Ascending aorta (tissue), 2 donors: ENCODE measurements at regions of chr5 and their contacts with region 1.

Region 1: GRCh38 chr5:4124221-4124970 is 528.8 kb downstream of the IRX1 start:
- DNase-seq: no peak
- H3K4me3 ChIP-seq: no peak overlapping the region
- H3K27ac ChIP-seq: no peak overlapping the region
- H3K4me1 ChIP-seq: no peaks in the 10 kb centered on the region
- H3K27me3 ChIP-seq: no peaks in the 10 kb centered on the region
- CTCF ChIP-seq: no peak

Region 2: DNA sequence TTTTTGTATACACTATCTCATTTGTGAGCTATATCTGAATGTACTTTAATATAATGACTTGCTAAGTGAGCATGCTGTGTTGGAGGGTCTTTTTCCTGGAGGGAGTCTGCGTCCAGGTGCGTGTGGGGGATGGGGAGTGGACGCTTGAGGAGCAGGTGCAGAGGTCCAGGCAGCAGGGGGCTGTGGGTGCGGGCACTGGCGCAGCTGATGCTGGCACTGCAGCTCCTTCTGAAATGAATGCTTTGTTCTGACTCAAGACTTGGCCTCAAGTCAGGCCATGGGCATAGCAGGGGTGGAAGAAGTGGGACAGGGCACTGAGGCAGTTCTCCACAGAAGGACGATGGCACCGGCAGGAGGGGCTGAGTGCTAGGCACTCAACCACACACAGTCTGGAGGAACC is 694.4 kb before region 1 on chr5:
- intact Hi-C with region 1: loop called (anchors 10 kb)
- DNase-seq: no peak
- H3K4me3 ChIP-seq: no peak overlapping the region
- H3K27ac ChIP-seq: no peak overlapping the region
- H3K4me1 ChIP-seq: no peaks in the 10 kb centered on the region
- H3K27me3 ChIP-seq: no peaks in the 10 kb centered on the region
- CTCF ChIP-seq: no peak

Region 3: DNA sequence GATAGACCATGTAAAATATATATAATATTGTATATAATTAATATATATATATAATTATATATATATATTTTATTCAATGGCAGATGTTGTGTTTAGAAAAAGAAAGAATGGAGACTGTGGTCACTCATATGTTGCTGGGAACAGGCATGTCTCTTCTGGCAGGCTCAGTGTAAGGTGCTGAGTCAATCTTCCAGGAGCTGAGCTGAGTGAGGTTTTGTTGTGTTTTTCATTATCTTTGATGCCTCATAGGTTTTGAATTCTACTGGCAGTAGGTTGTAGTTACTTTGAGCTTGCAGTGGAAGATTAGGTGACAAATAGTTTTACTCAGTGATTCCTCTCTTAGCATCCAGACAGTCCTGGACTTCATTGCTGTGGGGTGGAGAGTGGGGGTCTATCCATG is 32.5 kb after region 1 on chr5:
- intact Hi-C with region 1: no loop called
- DNase-seq: no peak
- H3K4me3 ChIP-seq: no peak overlapping the region
- H3K27ac ChIP-seq: no peak overlapping the region
- H3K4me1 ChIP-seq: no peaks in the 10 kb centered on the region
- H3K27me3 ChIP-seq: no peaks in the 10 kb centered on the region
- CTCF ChIP-seq: no peak